Ovary (tissue), 10 donors: ENCODE measurements at regions of chr5 and their contacts with region 1.

Region 1: GRCh38 chr5:154405078-154405792 is 40.6 kb upstream of the SAP30L start:
- DNase-seq: peak; percentile 80 to 91 (median 87)
- H3K4me3 ChIP-seq: peak overlapping the region; percentile 32
- H3K27ac ChIP-seq: peak overlapping the region in 1 of 2 donors; percentile 63
- H3K4me1 ChIP-seq: peaks cover 6% of the 10 kb centered on the region
- H3K27me3 ChIP-seq: no peaks in the 10 kb centered on the region
- CTCF ChIP-seq: peak; percentile 82 to 92 (median 87)
- EP300 ChIP-seq: no peak
- POLR2A ChIP-seq: no peak

Region 2: DNA sequence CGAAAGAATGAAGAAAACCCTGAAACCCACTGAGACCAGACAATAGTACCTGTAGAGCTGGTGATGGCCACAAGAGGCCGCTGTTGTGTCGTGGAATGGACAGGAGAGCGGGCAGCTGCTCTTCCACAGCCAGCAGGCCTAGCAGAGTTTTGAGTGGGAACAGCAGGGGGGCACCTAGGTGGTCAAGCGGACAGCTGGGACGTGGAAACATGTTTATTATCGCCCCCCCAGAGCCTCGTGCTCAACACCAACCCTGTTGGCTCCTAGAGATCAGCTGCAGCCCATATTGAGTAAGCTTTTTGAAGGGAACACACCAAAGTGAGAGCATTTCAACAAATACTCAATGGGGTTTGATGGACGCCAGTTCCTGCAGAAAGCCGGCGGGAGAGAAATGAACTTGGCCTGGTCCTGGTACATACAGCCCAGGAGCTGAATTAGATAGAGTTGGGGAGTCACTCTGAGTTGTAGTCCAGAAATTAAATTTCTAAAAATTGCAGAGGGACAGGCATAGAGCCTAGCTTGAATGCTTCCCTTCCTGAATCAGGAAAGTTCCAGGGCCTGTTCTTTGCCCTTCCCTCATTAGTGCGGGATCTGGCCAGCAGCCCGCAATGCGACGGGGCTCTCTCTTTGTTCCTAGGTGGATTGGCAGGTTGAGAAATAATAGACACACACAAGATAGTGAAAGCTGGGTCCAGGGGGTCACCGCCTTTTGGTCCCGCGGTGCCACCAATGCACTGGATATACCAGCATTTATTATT is 332.6 kb before region 1 on chr5:
- intact Hi-C with region 1: loop called (anchors 2 to 10 kb)
- DNase-seq: peak; percentile 73 to 89 (median 88)
- H3K4me3 ChIP-seq: no peak overlapping the region
- H3K27ac ChIP-seq: no peak overlapping the region
- H3K4me1 ChIP-seq: no peaks in the 10 kb centered on the region
- H3K27me3 ChIP-seq: no peaks in the 10 kb centered on the region
- CTCF ChIP-seq: peak; percentile 84 to 89 (median 88)
- EP300 ChIP-seq: no peak
- POLR2A ChIP-seq: no peak

Region 3: GRCh38 chr5:154179846-154180710 is 225.2 kb before region 1 on chr5:
- intact Hi-C with region 1: loop called in 1 of 4 experiments (anchors 10 kb)
- DNase-seq: no peak
- H3K4me3 ChIP-seq: no peak overlapping the region
- H3K27ac ChIP-seq: no peak overlapping the region
- H3K4me1 ChIP-seq: no peaks in the 10 kb centered on the region
- H3K27me3 ChIP-seq: no peaks in the 10 kb centered on the region
- CTCF ChIP-seq: peak; percentile 26 to 50 (median 38)
- EP300 ChIP-seq: no peak
- POLR2A ChIP-seq: no peak

Region 4: DNA sequence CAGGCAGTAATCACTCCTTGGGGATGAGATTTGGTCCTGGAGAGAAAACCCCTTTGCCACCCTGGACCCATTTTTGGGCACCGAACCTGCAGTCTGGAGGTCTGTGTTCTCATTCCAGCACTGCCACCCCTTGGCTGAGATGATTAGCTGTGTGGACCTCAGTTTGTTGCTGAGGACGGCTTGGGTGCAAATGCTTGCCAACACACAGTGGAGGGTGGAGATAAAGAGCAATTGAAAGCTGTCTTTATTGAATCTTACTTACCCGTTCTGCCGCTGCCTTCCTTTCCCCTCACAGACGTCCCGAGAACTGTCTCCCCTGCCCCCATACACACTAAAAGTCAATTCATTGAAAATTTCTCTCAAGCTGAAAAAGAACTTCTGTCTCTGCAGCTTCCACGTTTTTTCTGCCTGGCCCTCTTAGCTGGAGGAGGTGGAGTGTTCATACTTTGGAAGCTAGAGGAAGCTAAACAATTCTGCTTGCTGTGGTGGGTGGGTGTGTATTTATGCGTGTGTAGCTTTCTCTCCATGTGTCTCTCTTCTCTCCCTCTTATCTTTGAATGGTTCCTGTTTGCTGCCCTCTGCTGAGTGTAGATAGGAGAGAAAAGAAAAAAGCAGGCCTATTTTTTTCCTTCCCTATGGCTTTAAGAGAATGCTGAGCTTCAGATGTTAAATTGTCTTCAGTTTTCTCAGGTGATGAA is 208.1 kb before region 1 on chr5:
- intact Hi-C with region 1: loop called in 3 of 4 experiments (anchors 5 to 10 kb)
- DNase-seq: no peak
- H3K4me3 ChIP-seq: no peak overlapping the region
- H3K27ac ChIP-seq: peak overlapping the region in 1 of 2 donors; percentile 4
- H3K4me1 ChIP-seq: peaks cover 16% of the 10 kb centered on the region
- H3K27me3 ChIP-seq: no peaks in the 10 kb centered on the region
- CTCF ChIP-seq: peak in 1 of 3 donors; percentile 17
- EP300 ChIP-seq: no peak
- POLR2A ChIP-seq: no peak